ENCODE measurements at regions of chr10 and their contacts with region 1.

Region 1: DNA sequence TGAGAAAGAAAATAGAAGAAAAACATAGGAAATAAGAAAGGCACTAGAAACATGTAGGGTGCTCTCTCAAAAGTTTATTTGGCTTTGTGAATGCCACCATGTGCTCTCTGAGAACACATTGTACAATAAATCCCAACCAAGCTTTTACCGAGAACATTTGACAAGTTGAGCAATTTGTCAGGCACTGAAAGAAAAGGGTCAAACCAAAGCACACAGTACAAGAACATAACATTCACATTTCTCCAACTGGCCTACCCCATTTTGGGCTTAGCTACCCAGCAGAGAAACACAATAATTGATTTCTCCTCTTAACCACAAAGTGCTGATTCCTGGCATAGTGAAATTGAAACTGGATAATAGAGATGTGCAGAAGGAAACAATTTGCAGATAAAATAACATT is 69.2 kb upstream of the SLC39A12 start:
- DNase-seq: no peak
- H3K4me3 ChIP-seq: no peak overlapping the region
- CTCF ChIP-seq: no peak

Region 2: GRCh38 chr10:17872191-17873091 is 10.1 kb before region 1 on chr10:
- CTCF ChIA-PET with region 1: interaction called, 10 read pairs
- POLR2A ChIA-PET with region 1: no interaction called
- DNase-seq: no peak
- H3K4me3 ChIP-seq: no peak overlapping the region
- CTCF ChIP-seq: peak; percentile 29

Measured in AG04449 (cell line).